HepG2 (cell line): ENCODE measurements at regions of chr2 and their contacts with region 1.

Region 1: GRCh38 chr2:70132244-70133126 is 45.2 kb downstream of the PCBP1 start:
- DNase-seq: peak; percentile 86
- ATAC-seq: peak; percentile 83
- H3K4me3 ChIP-seq: peak overlapping the region; percentile 53 to 74 (median 73)
- H3K27ac ChIP-seq: peak overlapping the region; percentile 86
- H3K4me1 ChIP-seq: peaks cover 68% of the 10 kb centered on the region
- H3K27me3 ChIP-seq: no peaks in the 10 kb centered on the region
- CTCF ChIP-seq: no peak
- EP300 ChIP-seq: no peak; a peak in 1 of 4 replicates
- POLR2A ChIP-seq: peak; percentile 31 to 83; a peak in 3 of 4 replicates
- RAD21 ChIP-seq: 0 out of 2 replicates have a peak, but pooled peaks have one; percentile 21

Region 2: GRCh38 chr2:68537809-68538208 is 1594.7 kb before region 1 on chr2:
- CTCF ChIA-PET with region 1: no interaction called
- POLR2A ChIA-PET with region 1: no interaction called
- in situ Hi-C with region 1: no loop called
- intact Hi-C with region 1: no loop called
- DNase-seq: no peak
- ATAC-seq: no peak
- H3K4me3 ChIP-seq: no peak overlapping the region
- H3K27ac ChIP-seq: no peak overlapping the region
- H3K4me1 ChIP-seq: no peaks in the 10 kb centered on the region
- H3K27me3 ChIP-seq: no peaks in the 10 kb centered on the region
- CTCF ChIP-seq: no peak
- EP300 ChIP-seq: no peak
- POLR2A ChIP-seq: no peak
- RAD21 ChIP-seq: no peak

Region 3: GRCh38 chr2:70086838-70087701 is 45.4 kb before region 1 on chr2 and contains the start of gene PCBP1:
- CTCF ChIA-PET with region 1: no interaction called
- POLR2A ChIA-PET with region 1: interaction called, 124 read pairs
- in situ Hi-C with region 1: no loop called
- intact Hi-C with region 1: no loop called
- DNase-seq: peak; percentile 94
- ATAC-seq: peak; percentile 49
- H3K4me3 ChIP-seq: peak within 1 kb of the TSS; percentile 93 to 95 (median 95)
- H3K27ac ChIP-seq: peak within 1 kb of the TSS; percentile 99
- H3K4me1 ChIP-seq: peaks cover 56% of the 10 kb centered on the region
- H3K27me3 ChIP-seq: no peaks in the 10 kb centered on the region; a peak in 1 of 5 replicates
- CTCF ChIP-seq: no peak
- EP300 ChIP-seq: no peak; a peak in 2 of 4 replicates
- POLR2A ChIP-seq: peak; percentile 71 to 81
- RAD21 ChIP-seq: peak; percentile 50; the same call in 1 of the 2 replicates
- total RNA-seq, gene PCBP1: 32.0 and 104 TPM in 2 replicates

Region 4: DNA sequence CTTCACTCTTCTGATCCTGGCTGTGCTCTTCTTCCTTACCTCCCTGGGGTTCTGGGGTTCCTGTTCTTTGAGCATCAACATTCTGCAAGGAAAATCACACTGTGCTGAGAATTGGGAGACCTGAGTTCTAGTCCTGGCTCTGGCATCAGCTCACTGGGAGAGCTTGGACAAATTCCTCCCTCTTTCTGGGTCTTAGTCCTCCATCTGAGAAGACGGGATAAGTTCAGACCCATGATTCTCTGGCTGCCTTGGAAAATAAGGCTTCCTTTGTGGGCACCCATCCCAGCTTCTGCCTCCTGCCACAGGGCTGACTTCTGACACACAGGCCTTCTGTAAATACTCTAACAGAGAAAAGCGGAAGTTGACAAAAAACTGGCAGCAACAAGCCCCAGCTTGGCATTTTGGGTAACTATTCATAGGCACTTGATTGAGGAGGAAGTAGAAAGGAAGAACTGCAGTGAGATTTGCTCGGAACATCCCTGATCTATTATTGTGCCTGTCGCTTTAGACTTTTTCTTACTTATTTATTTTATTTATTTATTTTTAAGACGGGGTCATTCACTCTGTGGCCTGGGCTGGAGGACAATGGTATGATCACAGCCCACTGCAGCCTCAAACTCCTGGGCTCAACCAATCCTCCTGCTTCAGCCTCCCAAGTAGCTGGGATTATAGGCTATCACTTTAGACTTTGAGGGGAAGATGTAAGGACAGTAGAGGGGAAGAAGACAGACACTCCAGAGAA is 37.3 kb before region 1 on chr2:
- CTCF ChIA-PET with region 1: no interaction called
- POLR2A ChIA-PET with region 1: interaction called, 124 read pairs
- in situ Hi-C with region 1: no loop called
- intact Hi-C with region 1: no loop called
- DNase-seq: peak; percentile 87
- ATAC-seq: peak; percentile 73
- H3K4me3 ChIP-seq: peak overlapping the region; percentile 36 to 67 (median 50)
- H3K27ac ChIP-seq: peak overlapping the region; percentile 73
- H3K4me1 ChIP-seq: peaks cover 46% of the 10 kb centered on the region
- H3K27me3 ChIP-seq: no peaks in the 10 kb centered on the region
- CTCF ChIP-seq: no peak
- EP300 ChIP-seq: peak in 1 of 2 experiments; percentile 51; a peak in 2 of 4 replicates
- POLR2A ChIP-seq: peak; percentile 24 to 48; a peak in 1 of 4 replicates
- RAD21 ChIP-seq: no peak; the same call in 1 of the 2 replicates

Region 5: GRCh38 chr2:70115646-70116442 is 16.6 kb before region 1 on chr2:
- CTCF ChIA-PET with region 1: no interaction called
- POLR2A ChIA-PET with region 1: interaction called, 169 read pairs
- in situ Hi-C with region 1: no loop called
- intact Hi-C with region 1: no loop called
- DNase-seq: no peak
- ATAC-seq: no peak; the same call in 2 of the 3 replicates
- H3K4me3 ChIP-seq: no peak overlapping the region
- H3K27ac ChIP-seq: no peak overlapping the region
- H3K4me1 ChIP-seq: peaks cover 54% of the 10 kb centered on the region
- H3K27me3 ChIP-seq: no peaks in the 10 kb centered on the region
- CTCF ChIP-seq: no peak
- EP300 ChIP-seq: no peak
- POLR2A ChIP-seq: no peak
- RAD21 ChIP-seq: no peak